K562 (cell line): ENCODE measurements at regions of chr12 and their contacts with region 1.

Region 1: GRCh38 chr12:6825398-6826124 is 2.6 kb upstream of the P3H3 start:
- DNase-seq: peak; percentile 75 to 84 (median 81)
- ATAC-seq: peak; percentile 79
- H3K4me3 ChIP-seq: no peak overlapping the region
- H3K27ac ChIP-seq: no peak overlapping the region
- H3K4me1 ChIP-seq: peaks cover 19 to 58% of the 10 kb centered on the region in 2 experiments; a peak in 4 of 5 replicates
- H3K27me3 ChIP-seq: peaks cover 0 to 4% of the 10 kb centered on the region in 2 experiments; a peak in 2 of 5 replicates
- CTCF ChIP-seq: peak; percentile 89 to 91 (median 90)
- EP300 ChIP-seq: no peak; the same call in 1 of the 2 replicates
- POLR2A ChIP-seq: no peak
- RAD21 ChIP-seq: peak; percentile 72 to 81

Region 2: GRCh38 chr12:6416596-6416995 is 409.0 kb before region 1 on chr12:
- CTCF ChIA-PET with region 1: no interaction called
- POLR2A ChIA-PET with region 1: no interaction called
- in situ Hi-C with region 1: no loop called
- intact Hi-C with region 1: no loop called
- DNase-seq: no peak
- ATAC-seq: no peak
- H3K4me3 ChIP-seq: no peak overlapping the region
- H3K27ac ChIP-seq: no peak overlapping the region
- H3K4me1 ChIP-seq: no peaks in the 10 kb centered on the region; a peak in 1 of 5 replicates
- H3K27me3 ChIP-seq: no peaks in the 10 kb centered on the region
- CTCF ChIP-seq: no peak
- EP300 ChIP-seq: no peak
- POLR2A ChIP-seq: no peak
- RAD21 ChIP-seq: no peak

Region 3: DNA sequence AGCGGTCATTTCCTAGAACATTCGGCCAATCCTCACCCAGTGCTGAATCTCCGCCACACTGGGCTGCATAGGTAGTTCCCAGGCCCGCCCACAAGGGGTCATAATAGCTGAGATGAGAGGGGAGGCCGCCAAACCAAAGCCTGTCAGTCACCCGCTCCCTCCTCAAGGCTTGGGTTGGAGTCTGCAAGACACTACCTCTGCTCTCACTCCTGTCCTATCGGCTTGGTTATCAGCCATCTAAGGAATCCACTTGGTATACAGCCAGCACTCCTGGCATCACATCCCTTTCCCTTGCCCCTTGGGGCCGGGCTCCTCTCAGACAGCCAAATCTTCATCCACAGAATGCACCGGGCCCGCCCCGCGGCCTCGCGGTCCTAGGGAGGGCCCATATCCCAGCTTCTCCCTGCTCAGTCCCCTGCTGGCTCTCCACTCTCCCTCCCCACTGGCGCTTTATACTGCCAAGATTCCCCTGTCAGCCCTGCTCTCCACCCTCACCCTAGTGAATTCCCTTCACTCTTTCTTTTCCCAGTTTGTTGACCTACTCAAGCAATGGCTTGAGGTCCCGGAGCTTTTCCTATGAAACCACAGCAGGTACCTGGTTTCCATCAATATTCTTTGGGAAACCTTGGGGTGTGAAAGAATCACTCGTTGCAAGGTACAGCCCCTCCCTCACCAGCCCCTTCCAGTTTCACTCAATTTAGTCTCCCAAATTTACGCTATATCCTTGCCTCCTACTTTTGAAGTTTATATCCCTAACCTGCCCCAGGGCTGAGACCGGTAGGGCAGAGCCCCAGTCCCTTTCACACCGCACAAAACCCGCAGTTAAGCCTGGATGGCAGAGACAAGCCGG is 271.2 kb before region 1 on chr12:
- CTCF ChIA-PET with region 1: no interaction called
- POLR2A ChIA-PET with region 1: interaction called, 7 read pairs
- in situ Hi-C with region 1: no loop called
- intact Hi-C with region 1: loop called (anchors 10 kb)
- DNase-seq: peak; percentile 63 to 81 (median 73)
- ATAC-seq: peak; percentile 96
- H3K4me3 ChIP-seq: no peak overlapping the region
- H3K27ac ChIP-seq: no peak overlapping the region
- H3K4me1 ChIP-seq: peaks cover 2 to 36% of the 10 kb centered on the region in 2 experiments; a peak in 4 of 5 replicates
- H3K27me3 ChIP-seq: no peaks in the 10 kb centered on the region
- CTCF ChIP-seq: peak; percentile 66 to 77 (median 69)
- EP300 ChIP-seq: no peak
- POLR2A ChIP-seq: no peak
- RAD21 ChIP-seq: peak in 1 of 2 experiments; percentile 61; a peak in 2 of 4 replicates

Region 4: DNA sequence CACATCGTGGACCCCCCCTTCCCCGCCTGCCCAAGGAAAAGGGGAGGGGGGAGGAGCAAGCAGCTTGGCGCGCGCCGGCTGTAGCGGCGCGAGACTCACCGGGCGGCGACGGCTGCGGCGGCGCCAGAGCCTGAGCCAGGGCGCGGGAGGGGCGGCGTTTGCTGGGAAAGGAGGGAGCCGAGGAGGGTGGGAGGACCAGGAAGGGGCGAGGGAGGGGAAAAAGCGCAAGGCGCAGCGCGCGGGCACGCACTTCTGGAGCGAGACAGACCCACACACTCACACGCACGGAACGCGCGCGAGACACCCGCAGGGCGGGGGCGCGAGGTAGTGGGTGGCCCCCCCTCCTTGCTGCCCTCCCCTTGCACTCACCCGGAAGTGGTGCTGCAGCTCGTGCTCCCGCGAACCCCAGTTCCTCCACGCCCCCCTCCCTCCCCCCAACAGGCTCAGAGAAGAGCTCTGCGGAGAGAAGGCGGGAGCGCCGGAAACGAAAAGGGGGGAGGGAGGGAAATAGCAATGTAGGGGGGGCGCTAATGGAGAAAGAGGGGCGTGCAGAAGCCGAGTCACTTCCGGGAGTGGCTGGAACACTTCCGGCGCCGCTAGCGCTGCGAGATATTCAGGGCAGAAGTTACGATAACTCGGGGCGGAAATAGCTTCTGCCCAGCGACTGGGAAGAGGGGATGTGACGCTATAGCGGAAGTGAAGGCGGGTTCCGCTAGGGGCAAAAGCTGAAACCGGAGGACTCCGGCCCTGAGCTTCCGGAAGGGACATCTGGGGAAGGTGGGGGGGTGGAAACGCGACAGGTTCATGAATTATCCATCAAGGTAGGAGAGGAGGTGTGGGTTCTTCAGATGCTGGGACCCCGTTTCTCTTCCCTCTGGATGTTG is 136.3 kb before region 1 on chr12 and contains the start of gene ZNF384:
- CTCF ChIA-PET with region 1: no interaction called
- POLR2A ChIA-PET with region 1: interaction called, 3 read pairs
- in situ Hi-C with region 1: no loop called
- intact Hi-C with region 1: loop called (anchors 2 kb)
- DNase-seq: peak; percentile 87 to 97 (median 90)
- ATAC-seq: peak; percentile 88
- H3K4me3 ChIP-seq: peak within 1 kb of the TSS; percentile 70
- H3K27ac ChIP-seq: peak within 1 kb of the TSS; percentile 99
- H3K4me1 ChIP-seq: peaks cover 2 to 5% of the 10 kb centered on the region in 2 experiments; a peak in 2 of 5 replicates
- H3K27me3 ChIP-seq: no peaks in the 10 kb centered on the region
- CTCF ChIP-seq: peak in 2 of 3 experiments; percentile 12 to 13; a peak in 1 of 6 replicates
- EP300 ChIP-seq: 0 out of 2 replicates have a peak, but pooled peaks have one; percentile 12
- POLR2A ChIP-seq: peak; percentile 77
- RAD21 ChIP-seq: no peak
- polyA plus RNA-seq, gene ZNF384: 0.36 to 0.42 TPM

Region 5: GRCh38 chr12:6752921-6753771 is 72.4 kb before region 1 on chr12 and contains the start of gene MLF2:
- CTCF ChIA-PET with region 1: interaction called, 15 read pairs
- POLR2A ChIA-PET with region 1: interaction called, 7 read pairs
- in situ Hi-C with region 1: no loop called
- intact Hi-C with region 1: loop called (anchors 1 kb)
- DNase-seq: peak; percentile 93 to 97 (median 94)
- ATAC-seq: peak; percentile 97
- H3K4me3 ChIP-seq: peak within 1 kb of the TSS; percentile 99
- H3K27ac ChIP-seq: peak within 1 kb of the TSS; percentile 99
- H3K4me1 ChIP-seq: peaks cover 22 to 25% of the 10 kb centered on the region in 2 experiments
- H3K27me3 ChIP-seq: no peaks in the 10 kb centered on the region
- CTCF ChIP-seq: peak in 1 of 3 experiments; percentile 93; a peak in 3 of 6 replicates
- EP300 ChIP-seq: 0 out of 2 replicates have a peak, but pooled peaks have one; percentile 15
- POLR2A ChIP-seq: peak; percentile 90
- RAD21 ChIP-seq: no peak; a peak in 1 of 4 replicates
- polyA plus RNA-seq, gene MLF2: 11.4 to 15.6 TPM

Region 6: GRCh38 chr12:6839482-6840201 is 14.1 kb after region 1 on chr12:
- CTCF ChIA-PET with region 1: no interaction called
- POLR2A ChIA-PET with region 1: interaction called, 13 read pairs
- in situ Hi-C with region 1: no loop called
- intact Hi-C with region 1: no loop called
- DNase-seq: no peak
- ATAC-seq: no peak
- H3K4me3 ChIP-seq: no peak overlapping the region
- H3K27ac ChIP-seq: no peak overlapping the region
- H3K4me1 ChIP-seq: peaks cover 10 to 45% of the 10 kb centered on the region in 2 experiments; a peak in 4 of 5 replicates
- H3K27me3 ChIP-seq: no peaks in the 10 kb centered on the region
- CTCF ChIP-seq: no peak
- EP300 ChIP-seq: no peak
- POLR2A ChIP-seq: no peak
- RAD21 ChIP-seq: no peak